ENCODE measurements at regions of chr12 and their contacts with region 1.

Region 1: DNA sequence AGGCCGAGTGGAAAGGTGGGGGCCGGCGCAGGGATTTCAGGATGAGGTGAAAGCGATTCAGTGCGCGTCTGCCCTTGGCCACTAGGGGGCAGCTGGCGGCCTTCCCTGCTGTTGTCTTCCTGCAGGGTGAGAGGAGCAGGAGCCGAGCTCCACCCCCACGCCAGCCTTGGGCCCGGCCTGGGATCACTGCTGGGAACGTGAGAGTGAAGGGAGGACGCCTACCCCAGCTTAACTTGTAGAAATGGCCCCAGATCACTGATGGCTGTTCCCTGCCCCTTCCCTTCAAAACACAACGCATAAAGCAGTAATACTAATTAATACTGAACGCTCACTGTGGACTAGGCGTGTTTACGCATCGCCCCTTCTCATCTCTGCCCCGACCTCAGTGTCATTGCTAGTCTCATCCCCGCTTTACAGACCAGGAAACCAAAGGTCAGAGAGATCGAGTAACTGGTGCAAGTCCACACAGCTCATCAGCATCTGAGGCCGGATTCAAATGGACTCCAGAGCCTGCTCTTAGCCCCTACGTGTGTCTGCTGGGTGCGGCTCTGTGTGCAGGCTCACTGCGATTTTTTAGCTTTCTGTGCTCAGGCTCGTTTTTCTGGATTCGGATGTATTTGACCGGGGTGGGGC is 24.3 kb downstream of the MVK start:
- ATAC-seq: peak; percentile 91 to 98 (median 96)
- H3K4me3 ChIP-seq: peak overlapping the region in 1 of 5 donors; percentile 13
- H3K27ac ChIP-seq: peak overlapping the region in 1 of 2 donors; percentile 54
- H3K4me1 ChIP-seq: peaks cover 12 to 17% of the 10 kb centered on the region in 2 donors

Region 2: DNA sequence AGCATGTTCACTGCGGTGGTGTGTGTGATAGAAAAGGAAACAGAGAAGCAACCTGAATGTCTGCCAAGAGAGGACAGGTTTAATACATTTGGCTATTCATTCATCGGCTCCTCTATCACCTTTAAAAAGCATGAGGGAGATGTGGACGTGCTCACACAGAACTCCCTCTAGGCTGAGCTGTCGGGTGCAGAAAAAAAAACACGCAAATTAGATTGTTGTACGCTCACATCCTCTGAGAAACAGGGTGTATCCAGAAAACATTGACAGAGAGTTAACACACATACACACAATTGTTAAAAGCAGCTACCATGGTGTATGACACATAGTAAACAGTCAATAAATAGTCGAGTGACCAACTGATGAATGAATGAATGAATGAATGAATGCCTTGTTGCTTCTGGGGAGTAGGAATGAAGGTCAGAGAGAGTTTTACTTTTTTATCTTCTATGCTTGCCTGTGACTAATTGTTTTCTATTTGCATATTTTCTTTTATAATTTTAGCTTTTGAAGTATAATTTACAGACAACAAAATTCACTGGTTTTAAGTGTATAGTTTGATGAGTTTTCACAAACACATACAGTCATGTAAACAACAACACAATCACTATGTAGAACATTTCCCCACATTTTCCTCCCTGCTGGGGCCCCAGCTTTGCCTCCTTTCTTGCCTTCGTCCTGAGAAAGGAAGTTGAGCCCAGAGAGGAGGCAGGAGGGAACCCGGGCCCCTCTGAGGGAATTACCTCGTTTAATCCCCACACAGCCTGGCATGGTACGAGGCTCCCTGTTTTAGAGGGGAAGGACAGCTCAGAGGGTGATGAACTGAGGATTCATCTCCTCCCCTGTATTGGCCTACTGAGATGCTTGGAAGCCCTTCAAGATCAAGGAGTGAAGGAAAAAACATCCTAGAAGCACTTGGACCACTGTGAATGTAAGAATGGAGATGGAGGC is 96.0 kb after region 1 on chr12:
- in situ Hi-C with region 1: no loop called
- ATAC-seq: peak in 3 of 8 experiments; percentile 19 to 50 (median 38)
- H3K4me3 ChIP-seq: no peak overlapping the region
- H3K27ac ChIP-seq: no peak overlapping the region
- H3K4me1 ChIP-seq: peaks cover 6 to 8% of the 10 kb centered on the region in 2 donors

Region 3: DNA sequence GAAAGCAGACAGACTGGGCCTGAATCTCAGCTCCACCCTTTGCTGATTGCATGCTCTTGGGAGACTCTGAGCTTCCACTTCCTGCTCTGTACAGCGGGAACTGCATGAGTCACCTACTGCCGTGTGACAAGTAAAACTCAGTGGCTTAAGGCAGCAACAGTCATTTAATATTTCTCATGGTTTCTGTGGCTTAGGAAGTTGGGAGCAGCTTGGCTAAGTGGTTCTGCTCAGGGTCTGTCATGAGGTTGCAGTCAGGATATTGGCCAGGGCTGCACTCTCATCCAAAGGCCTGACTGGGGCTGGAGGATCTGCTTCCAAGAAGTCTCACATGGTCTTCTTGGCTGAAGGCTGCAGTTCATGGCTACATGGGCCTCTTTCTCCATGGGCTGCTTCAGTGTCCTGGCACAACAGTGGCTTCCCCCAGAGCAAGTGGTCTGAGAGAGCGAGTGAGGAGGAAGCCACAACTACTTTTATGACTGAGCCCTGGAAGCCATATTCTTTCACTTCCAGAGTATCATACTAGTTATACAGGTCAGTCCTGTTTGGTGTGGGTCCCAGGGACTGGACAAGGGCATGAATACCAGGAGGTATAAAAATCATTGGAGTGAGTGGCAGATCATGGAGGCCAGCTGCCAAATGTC is 165.4 kb after region 1 on chr12:
- in situ Hi-C with region 1: loop called in 1 of 9 experiments (anchors 25 kb)
- ATAC-seq: peak in 2 of 8 experiments; percentile 93 to 97
- H3K4me3 ChIP-seq: no peak overlapping the region
- H3K27ac ChIP-seq: no peak overlapping the region
- H3K4me1 ChIP-seq: peaks cover 8 to 20% of the 10 kb centered on the region in 2 donors

Region 4: DNA sequence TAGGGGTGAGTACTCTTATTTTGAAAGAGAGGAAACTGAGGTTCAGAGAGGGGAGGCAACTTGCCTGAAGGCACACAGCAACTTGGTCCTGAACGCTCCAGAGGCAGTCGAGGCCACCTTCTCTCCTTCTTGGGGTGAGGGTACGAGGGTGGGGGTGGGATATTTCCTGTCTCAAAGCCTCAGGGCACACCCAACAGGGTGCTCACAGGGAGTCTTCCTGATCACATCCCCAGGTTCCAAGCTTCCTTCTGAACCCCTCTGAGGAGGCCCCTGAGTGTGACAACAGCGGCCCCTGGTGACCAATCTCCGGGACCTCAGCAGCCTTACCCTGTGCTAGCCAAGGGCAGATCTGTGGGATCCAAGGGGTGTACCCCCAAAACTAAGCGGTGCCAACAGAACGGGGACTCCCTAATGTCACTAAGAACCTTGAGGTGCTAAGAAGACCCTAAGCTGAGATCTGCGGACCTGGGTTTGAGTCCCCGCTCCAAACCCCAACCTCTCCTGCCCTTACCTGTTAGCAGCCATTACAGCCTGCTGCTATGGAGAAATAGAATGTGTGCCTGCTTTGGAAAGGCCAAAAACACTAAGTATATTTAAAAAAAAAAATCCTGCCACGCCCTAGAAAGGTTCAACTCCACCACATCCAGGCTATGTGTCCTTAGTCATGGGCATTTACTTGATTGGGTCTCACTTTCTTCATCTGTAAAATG is 177.4 kb after region 1 on chr12:
- in situ Hi-C with region 1: loop called in 4 of 9 experiments (anchors 10 to 25 kb)
- ATAC-seq: peak; percentile 74 to 95 (median 92)
- H3K4me3 ChIP-seq: no peak overlapping the region
- H3K27ac ChIP-seq: no peak overlapping the region
- H3K4me1 ChIP-seq: no peaks in the 10 kb centered on the region

Region 5: DNA sequence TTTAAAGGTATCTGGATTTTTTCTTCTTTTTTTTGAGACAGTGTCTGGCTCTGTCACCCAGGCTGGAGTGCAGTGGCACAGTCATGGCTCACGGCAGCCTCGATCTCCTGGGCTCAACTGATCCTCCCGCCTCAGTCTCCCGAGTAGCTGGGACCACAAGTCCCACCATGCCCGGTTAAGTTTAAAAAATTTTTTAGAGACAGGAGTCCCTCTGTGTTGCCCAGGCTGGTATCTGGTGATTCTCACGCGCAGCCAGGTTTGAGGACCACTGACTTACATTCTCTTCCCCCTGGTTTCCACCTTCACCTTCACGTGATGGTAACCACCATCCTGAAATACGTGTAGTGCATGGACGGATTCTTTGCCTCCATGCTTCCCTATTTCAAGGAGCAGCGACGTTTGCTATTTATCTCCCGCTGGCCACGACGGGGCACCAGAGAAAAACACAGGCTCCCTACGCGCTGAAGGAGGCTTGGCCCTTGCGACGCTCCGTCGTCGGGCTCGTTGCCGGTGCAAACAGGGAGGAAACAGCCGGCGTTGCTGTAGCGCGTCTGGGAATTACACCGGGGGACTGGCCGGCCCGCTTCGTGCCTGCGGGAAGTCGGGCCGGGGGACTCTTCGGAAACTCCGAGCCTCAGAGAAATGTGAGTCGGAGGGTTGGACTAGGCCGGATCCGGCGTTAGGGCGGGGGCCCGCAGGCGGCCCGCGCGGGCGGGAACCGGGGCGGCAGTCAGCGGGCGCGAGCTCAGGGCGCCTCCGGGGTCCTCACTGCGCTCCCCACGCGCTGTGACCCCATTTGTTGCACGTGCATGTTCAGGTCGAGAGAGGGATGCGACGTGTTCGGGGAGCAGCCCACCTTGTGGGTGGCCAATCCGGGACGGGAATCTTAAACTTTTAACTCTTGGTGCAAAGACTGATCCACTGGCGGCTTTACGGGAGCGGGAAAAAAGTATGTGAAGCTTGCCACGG is 302.2 kb after region 1 on chr12 and contains the start of gene TCHP:
- in situ Hi-C with region 1: loop called in 2 of 9 experiments (anchors 25 kb)
- ATAC-seq: peak; percentile 84 to 94 (median 91)
- H3K4me3 ChIP-seq: peak within 1 kb of the TSS; percentile 44 to 69 (median 53)
- H3K27ac ChIP-seq: peak within 1 kb of the TSS; percentile 58 to 79
- H3K4me1 ChIP-seq: peaks cover 12 to 13% of the 10 kb centered on the region in 2 donors
- total RNA-seq, gene TCHP: 7.5 to 23.7 (median 14.3) TPM